CD4-positive, alpha-beta T cell (primary cell): ENCODE measurements at regions of chr10 and their contacts with region 1.

Region 1: GRCh38 chr10:118662228-118663035 is 67.0 kb upstream of the PRLHR start:
- DNase-seq: peak in 8 of 14 experiments; percentile 13 to 67 (median 39)
- ATAC-seq: peak; percentile 66
- H3K4me3 ChIP-seq: no peak overlapping the region
- H3K4me3 Mint-ChIP-seq: peak overlapping the region; percentile 77
- H3K27ac ChIP-seq: no peak overlapping the region
- H3K27ac Mint-ChIP-seq: peak overlapping the region; percentile 82
- H3K4me1 ChIP-seq: peaks cover 44% of the 10 kb centered on the region
- H3K4me1 Mint-ChIP-seq: peaks cover 77% of the 10 kb centered on the region
- H3K27me3 ChIP-seq: no peaks in the 10 kb centered on the region
- H3K27me3 Mint-ChIP-seq: no peaks in the 10 kb centered on the region
- CTCF ChIP-seq: no peak

Region 2: DNA sequence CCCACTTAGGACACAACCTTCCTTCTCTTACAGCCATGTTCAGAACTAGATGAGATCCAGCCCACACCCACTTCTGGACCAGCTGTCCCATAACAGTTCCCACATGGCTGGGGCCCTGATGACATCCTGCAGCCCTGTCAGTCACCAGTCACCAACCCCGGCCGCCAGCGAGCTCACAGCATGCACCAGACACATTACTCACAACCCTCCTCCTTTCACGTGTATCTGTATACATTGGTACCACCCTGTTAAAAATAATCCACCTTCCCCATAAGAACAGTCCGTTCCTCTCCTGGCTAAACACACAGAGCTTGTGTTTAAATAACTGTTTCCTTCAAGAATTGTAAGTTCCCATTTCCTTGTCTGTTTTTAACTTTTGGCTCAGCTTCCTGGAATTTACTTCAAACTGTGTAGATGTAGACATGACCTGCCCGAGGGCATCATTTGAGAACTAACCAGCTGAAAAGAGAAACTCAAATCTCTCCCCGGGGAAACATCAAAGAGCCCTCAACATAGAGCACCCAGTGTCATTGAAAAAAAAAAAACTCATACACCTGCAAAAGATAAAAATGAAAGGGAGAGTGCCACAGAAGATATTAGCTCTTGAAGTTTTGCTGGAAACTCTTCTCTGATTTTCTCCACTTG is 41.0 kb before region 1 on chr10:
- CTCF ChIA-PET with region 1: no interaction called
- POLR2A ChIA-PET with region 1: interaction called, 3 read pairs
- intact Hi-C with region 1: loop called in 1 of 2 experiments (anchors 2 kb)
- DNase-seq: peak in 11 of 14 experiments; percentile 3 to 59 (median 30)
- ATAC-seq: peak; percentile 82
- H3K4me3 ChIP-seq: no peak overlapping the region
- H3K4me3 Mint-ChIP-seq: peak overlapping the region; percentile 35
- H3K27ac ChIP-seq: no peak overlapping the region
- H3K27ac Mint-ChIP-seq: peak overlapping the region; percentile 60
- H3K4me1 ChIP-seq: peaks cover 16% of the 10 kb centered on the region
- H3K4me1 Mint-ChIP-seq: peaks cover 30% of the 10 kb centered on the region
- H3K27me3 ChIP-seq: no peaks in the 10 kb centered on the region
- H3K27me3 Mint-ChIP-seq: no peaks in the 10 kb centered on the region
- CTCF ChIP-seq: no peak

Region 3: DNA sequence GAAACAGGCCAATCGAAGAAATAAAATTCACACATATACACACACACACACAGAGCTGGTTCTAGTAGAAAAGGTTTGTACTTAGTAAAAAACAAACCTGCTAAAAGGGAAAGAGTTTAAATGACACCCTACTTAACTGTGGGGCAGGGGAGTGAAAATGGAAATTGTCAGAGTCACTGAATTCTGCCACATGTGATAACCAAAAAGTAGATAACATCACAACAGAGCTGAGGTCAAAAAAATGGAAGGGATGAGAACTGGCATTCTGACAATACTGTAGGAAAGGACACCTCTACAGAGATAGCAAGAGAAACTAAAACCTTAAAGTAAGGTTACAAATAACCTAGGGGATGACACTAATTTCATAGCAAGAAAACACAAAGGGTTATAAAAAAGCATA is 17.8 kb after region 1 on chr10:
- CTCF ChIA-PET with region 1: no interaction called
- POLR2A ChIA-PET with region 1: no interaction called
- intact Hi-C with region 1: no loop called
- DNase-seq: no peak
- ATAC-seq: no peak
- H3K4me3 ChIP-seq: no peak overlapping the region
- H3K4me3 Mint-ChIP-seq: no peak overlapping the region
- H3K27ac ChIP-seq: no peak overlapping the region
- H3K27ac Mint-ChIP-seq: no peak overlapping the region
- H3K4me1 ChIP-seq: no peaks in the 10 kb centered on the region
- H3K4me1 Mint-ChIP-seq: peaks cover 28% of the 10 kb centered on the region
- H3K27me3 ChIP-seq: no peaks in the 10 kb centered on the region
- H3K27me3 Mint-ChIP-seq: no peaks in the 10 kb centered on the region
- CTCF ChIP-seq: no peak

Region 4: DNA sequence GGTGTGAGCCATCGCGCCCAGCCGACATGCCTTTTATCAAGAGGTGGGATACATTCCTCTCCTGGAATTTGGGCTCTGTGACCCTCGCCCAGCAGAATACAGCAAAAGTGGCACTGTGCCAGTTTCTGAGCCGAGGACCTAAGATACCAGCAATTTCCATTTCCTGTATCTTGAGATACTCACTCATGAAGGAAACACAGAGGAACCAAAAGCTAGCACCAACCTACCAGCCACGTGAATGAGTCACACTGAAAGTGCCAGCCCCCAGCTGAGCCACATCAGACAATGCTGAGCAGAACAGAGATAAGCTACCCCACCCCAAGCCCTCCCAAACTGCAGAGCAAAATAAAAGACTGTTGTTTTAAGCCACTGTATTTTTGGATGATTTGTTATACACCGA is 36.0 kb after region 1 on chr10:
- CTCF ChIA-PET with region 1: no interaction called
- POLR2A ChIA-PET with region 1: interaction called, 14 read pairs
- intact Hi-C with region 1: loop called (anchors 2 to 5 kb)
- DNase-seq: peak; percentile 64 to 91 (median 80)
- ATAC-seq: peak; percentile 100
- H3K4me3 ChIP-seq: peak overlapping the region; percentile 22
- H3K4me3 Mint-ChIP-seq: peak overlapping the region; percentile 71
- H3K27ac ChIP-seq: peak overlapping the region; percentile 46 to 50
- H3K27ac Mint-ChIP-seq: peak overlapping the region; percentile 80
- H3K4me1 ChIP-seq: peaks cover 17% of the 10 kb centered on the region
- H3K4me1 Mint-ChIP-seq: peaks cover 84% of the 10 kb centered on the region
- H3K27me3 ChIP-seq: no peaks in the 10 kb centered on the region
- H3K27me3 Mint-ChIP-seq: no peaks in the 10 kb centered on the region
- CTCF ChIP-seq: no peak